WTC11 (cell line): ENCODE measurements at regions of chr11 and their contacts with region 1.

Region 1: GRCh38 chr11:76152086-76152681 is 54.1 kb downstream of the WNT11 start:
- DNase-seq: peak; percentile 90
- ATAC-seq: peak; percentile 91
- H3K4me3 Mint-ChIP-seq: peak overlapping the region; percentile 70
- H3K27ac Mint-ChIP-seq: no peak overlapping the region
- H3K4me1 Mint-ChIP-seq: peaks cover 13% of the 10 kb centered on the region
- H3K27me3 Mint-ChIP-seq: peaks cover 22% of the 10 kb centered on the region
- CTCF ChIP-seq: peak; percentile 92

Region 2: DNA sequence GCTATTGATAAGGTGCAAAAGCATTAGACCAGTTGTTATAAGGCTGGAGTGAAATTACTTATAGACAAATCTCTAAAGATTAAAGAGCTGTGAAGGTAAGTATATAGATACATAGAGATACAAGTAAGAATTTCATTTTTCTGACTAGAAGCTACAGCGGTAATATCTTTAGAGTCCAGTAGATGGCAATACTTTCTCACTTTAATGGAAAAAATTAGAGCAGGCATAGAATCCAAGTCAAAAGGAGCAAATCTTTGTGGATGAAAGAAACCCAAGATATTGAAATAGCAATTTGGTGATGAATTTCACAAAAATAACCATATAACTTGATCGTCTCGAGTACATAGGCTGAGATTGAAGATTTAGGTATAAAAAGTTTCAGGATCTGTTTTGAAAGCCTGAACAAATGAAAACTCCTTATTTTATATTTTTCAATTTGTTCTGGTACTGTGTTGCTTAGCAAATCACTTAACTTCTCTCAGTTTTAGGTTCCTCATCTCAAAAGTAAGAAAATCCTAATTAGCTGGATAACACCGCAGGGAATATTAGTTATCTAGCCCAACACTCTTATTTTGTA is 255.3 kb before region 1 on chr11:
- CTCF ChIA-PET with region 1: interaction called, 106 read pairs
- POLR2A ChIA-PET with region 1: interaction called, 3 read pairs
- DNase-seq: no peak
- ATAC-seq: no peak
- H3K4me3 Mint-ChIP-seq: no peak overlapping the region
- H3K27ac Mint-ChIP-seq: no peak overlapping the region
- H3K4me1 Mint-ChIP-seq: no peaks in the 10 kb centered on the region
- H3K27me3 Mint-ChIP-seq: no peaks in the 10 kb centered on the region
- CTCF ChIP-seq: peak; percentile 58

Region 3: GRCh38 chr11:76115555-76115954 is 36.6 kb before region 1 on chr11:
- CTCF ChIA-PET with region 1: interaction called, 31 read pairs
- POLR2A ChIA-PET with region 1: no interaction called
- DNase-seq: no peak
- ATAC-seq: no peak
- H3K4me3 Mint-ChIP-seq: no peak overlapping the region
- H3K27ac Mint-ChIP-seq: no peak overlapping the region
- H3K4me1 Mint-ChIP-seq: no peaks in the 10 kb centered on the region
- H3K27me3 Mint-ChIP-seq: no peaks in the 10 kb centered on the region
- CTCF ChIP-seq: no peak

Region 4: DNA sequence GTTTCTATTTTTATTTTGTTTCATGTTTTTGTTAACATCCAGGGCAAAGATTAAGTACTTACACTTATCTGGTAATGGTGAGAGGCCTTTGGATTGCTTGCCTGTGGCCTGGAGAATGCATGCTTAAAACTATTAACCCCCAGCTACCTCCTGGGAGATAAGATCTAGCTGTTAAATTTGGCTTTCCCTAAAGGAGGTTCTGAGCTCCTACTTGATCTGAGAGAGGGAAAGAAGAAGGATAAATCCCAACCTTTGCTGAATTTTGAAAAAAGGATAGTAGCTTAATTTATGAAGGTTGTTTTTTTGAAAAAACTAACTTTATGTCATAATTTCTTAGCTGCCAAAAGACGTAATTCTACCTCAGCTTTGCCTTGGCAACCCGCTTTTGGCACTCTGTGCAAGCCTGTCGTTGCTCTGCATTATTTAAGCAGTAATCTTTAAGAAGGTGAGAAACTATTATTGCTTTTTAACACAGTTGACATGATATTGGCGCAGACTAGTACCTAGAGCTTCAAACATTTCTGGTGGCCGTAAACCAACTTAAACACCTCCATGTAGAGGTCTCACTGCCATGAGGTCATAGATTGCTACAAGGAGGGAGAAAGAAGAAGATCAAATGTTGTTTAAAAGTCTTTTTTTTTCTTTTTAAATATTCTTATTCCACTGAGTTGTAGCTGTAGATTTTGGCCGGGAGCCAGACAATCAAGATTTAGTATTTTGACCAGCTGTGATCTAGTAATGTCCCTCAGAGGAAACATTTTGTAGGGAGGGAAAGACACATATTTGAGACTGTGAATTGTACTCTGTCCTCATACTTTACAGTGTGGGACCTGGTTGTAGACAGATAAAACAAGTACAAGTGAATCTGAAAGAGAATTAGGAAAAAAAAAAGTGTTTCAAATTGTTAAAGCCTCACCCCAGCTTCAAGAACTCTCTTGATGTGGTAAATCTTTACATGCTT is 20.2 kb before region 1 on chr11:
- CTCF ChIA-PET with region 1: interaction called, 12 read pairs
- POLR2A ChIA-PET with region 1: no interaction called
- DNase-seq: no peak
- ATAC-seq: no peak
- H3K4me3 Mint-ChIP-seq: no peak overlapping the region
- H3K27ac Mint-ChIP-seq: no peak overlapping the region
- H3K4me1 Mint-ChIP-seq: no peaks in the 10 kb centered on the region; the same call in 1 of the 2 replicates
- H3K27me3 Mint-ChIP-seq: no peaks in the 10 kb centered on the region
- CTCF ChIP-seq: no peak

Region 5: GRCh38 chr11:76185931-76186401 is 33.8 kb after region 1 on chr11:
- CTCF ChIA-PET with region 1: interaction called, 21 read pairs
- POLR2A ChIA-PET with region 1: no interaction called
- DNase-seq: no peak
- ATAC-seq: no peak
- H3K4me3 Mint-ChIP-seq: no peak overlapping the region
- H3K27ac Mint-ChIP-seq: no peak overlapping the region
- H3K4me1 Mint-ChIP-seq: 0 out of 2 replicates have a peak, but pooled peaks cover 4% of the 10 kb centered on the region
- H3K27me3 Mint-ChIP-seq: no peaks in the 10 kb centered on the region
- CTCF ChIP-seq: no peak